ENCODE measurements at regions of chr13 and their contacts with region 1.

Region 1: GRCh38 chr13:41061075-41061913 is at the start of gene WBP4:
- DNase-seq: peak; percentile 93
- ATAC-seq: peak; percentile 77
- H3K4me3 Mint-ChIP-seq: peak within 1 kb of the TSS; percentile 98
- H3K27ac Mint-ChIP-seq: peak within 1 kb of the TSS; percentile 100
- H3K4me1 Mint-ChIP-seq: peaks cover 57% of the 10 kb centered on the region
- H3K27me3 Mint-ChIP-seq: no peaks in the 10 kb centered on the region
- total RNA-seq, gene WBP4: 13.3 to 16.2 TPM

Region 2: GRCh38 chr13:40922437-40923040 is 138.8 kb before region 1 on chr13:
- CTCF ChIA-PET with region 1: interaction called, 3 read pairs
- POLR2A ChIA-PET with region 1: interaction called, 3 read pairs
- intact Hi-C with region 1: loop called in 1 of 2 experiments (anchors 2 kb)
- DNase-seq: no peak
- ATAC-seq: no peak
- H3K4me3 Mint-ChIP-seq: peak overlapping the region; percentile 32
- H3K27ac Mint-ChIP-seq: peak overlapping the region; percentile 76
- H3K4me1 Mint-ChIP-seq: peaks cover 20% of the 10 kb centered on the region
- H3K27me3 Mint-ChIP-seq: no peaks in the 10 kb centered on the region

Region 3: GRCh38 chr13:41019011-41019487 is 42.2 kb before region 1 on chr13 and contains the start of gene ELF1:
- CTCF ChIA-PET with region 1: interaction called, 4 read pairs
- POLR2A ChIA-PET with region 1: interaction called, 7 read pairs
- intact Hi-C with region 1: loop called (anchors 1 to 2 kb)
- DNase-seq: peak; percentile 67
- ATAC-seq: peak; percentile 87
- H3K4me3 Mint-ChIP-seq: peak within 1 kb of the TSS; percentile 88
- H3K27ac Mint-ChIP-seq: peak within 1 kb of the TSS; percentile 96
- H3K4me1 Mint-ChIP-seq: peaks cover 31% of the 10 kb centered on the region
- H3K27me3 Mint-ChIP-seq: no peaks in the 10 kb centered on the region
- total RNA-seq, gene ELF1: 75.2 to 87.0 TPM

Region 4: GRCh38 chr13:41101866-41102265 is 40.6 kb after region 1 on chr13:
- CTCF ChIA-PET with region 1: no interaction called
- POLR2A ChIA-PET with region 1: no interaction called
- intact Hi-C with region 1: no loop called
- DNase-seq: no peak
- ATAC-seq: no peak
- H3K4me3 Mint-ChIP-seq: no peak overlapping the region
- H3K27ac Mint-ChIP-seq: no peak overlapping the region
- H3K4me1 Mint-ChIP-seq: no peaks in the 10 kb centered on the region
- H3K27me3 Mint-ChIP-seq: no peaks in the 10 kb centered on the region

Region 5: GRCh38 chr13:41193919-41194824 is 132.9 kb after region 1 on chr13 and contains the start of gene KBTBD7:
- CTCF ChIA-PET with region 1: no interaction called
- POLR2A ChIA-PET with region 1: interaction called, 3 read pairs
- intact Hi-C with region 1: loop called (anchors 1 kb)
- DNase-seq: peak; percentile 98
- ATAC-seq: peak; percentile 96
- H3K4me3 Mint-ChIP-seq: peak within 1 kb of the TSS; percentile 83
- H3K27ac Mint-ChIP-seq: peak within 1 kb of the TSS; percentile 98
- H3K4me1 Mint-ChIP-seq: peaks cover 50% of the 10 kb centered on the region
- H3K27me3 Mint-ChIP-seq: no peaks in the 10 kb centered on the region
- total RNA-seq, gene KBTBD7: 3.7 to 4.5 TPM

Region 6: GRCh38 chr13:41352935-41353840 is 291.9 kb after region 1 on chr13:
- CTCF ChIA-PET with region 1: no interaction called
- POLR2A ChIA-PET with region 1: no interaction called
- intact Hi-C with region 1: loop called in 1 of 2 experiments (anchors 5 kb)
- DNase-seq: peak; percentile 55
- ATAC-seq: peak; percentile 54
- H3K4me3 Mint-ChIP-seq: no peak overlapping the region
- H3K27ac Mint-ChIP-seq: peak overlapping the region; percentile 78
- H3K4me1 Mint-ChIP-seq: peaks cover 55% of the 10 kb centered on the region
- H3K27me3 Mint-ChIP-seq: no peaks in the 10 kb centered on the region